ENCODE measurements at regions of chr1 and their contacts with region 1.

Region 1: GRCh38 chr1:54052934-54053744 is at the starts of genes TCEANC2 and TMEM59:
- DNase-seq: peak; percentile 100
- H3K4me3 ChIP-seq: peak within 1 kb of the TSS; percentile 82 to 90 (median 89)
- H3K27ac ChIP-seq: peak within 1 kb of the TSS; percentile 91
- H3K4me1 ChIP-seq: peaks cover 6% of the 10 kb centered on the region
- H3K27me3 ChIP-seq: no peaks in the 10 kb centered on the region
- CTCF ChIP-seq: no peak
- total RNA-seq, gene TCEANC2: 3.8 to 5.5 TPM
- total RNA-seq, gene TMEM59: 164 to 223 TPM

Region 2: GRCh38 chr1:53837924-53838652 is 215.1 kb before region 1 on chr1 and contains the start of gene NDC1:
- CTCF ChIA-PET with region 1: no interaction called
- dilution Hi-C with region 1: no loop called
- in situ Hi-C with region 1: no loop called
- intact Hi-C with region 1: loop called (anchors 1 kb)
- DNase-seq: peak; percentile 96
- H3K4me3 ChIP-seq: peak within 1 kb of the TSS; percentile 79 to 98 (median 97)
- H3K27ac ChIP-seq: peak within 1 kb of the TSS; percentile 77
- H3K4me1 ChIP-seq: peaks cover 7% of the 10 kb centered on the region
- H3K27me3 ChIP-seq: no peaks in the 10 kb centered on the region
- CTCF ChIP-seq: peak in 1 of 2 donors; percentile 22
- total RNA-seq, gene NDC1: 18.2 to 23.3 TPM